Activated naive CD4-positive, alpha-beta T cell treated with anti-CD3 and anti-CD28 coated beads for 36 hours (primary cell): ENCODE measurements at regions of chr1 and their contacts with region 1.

Region 1: DNA sequence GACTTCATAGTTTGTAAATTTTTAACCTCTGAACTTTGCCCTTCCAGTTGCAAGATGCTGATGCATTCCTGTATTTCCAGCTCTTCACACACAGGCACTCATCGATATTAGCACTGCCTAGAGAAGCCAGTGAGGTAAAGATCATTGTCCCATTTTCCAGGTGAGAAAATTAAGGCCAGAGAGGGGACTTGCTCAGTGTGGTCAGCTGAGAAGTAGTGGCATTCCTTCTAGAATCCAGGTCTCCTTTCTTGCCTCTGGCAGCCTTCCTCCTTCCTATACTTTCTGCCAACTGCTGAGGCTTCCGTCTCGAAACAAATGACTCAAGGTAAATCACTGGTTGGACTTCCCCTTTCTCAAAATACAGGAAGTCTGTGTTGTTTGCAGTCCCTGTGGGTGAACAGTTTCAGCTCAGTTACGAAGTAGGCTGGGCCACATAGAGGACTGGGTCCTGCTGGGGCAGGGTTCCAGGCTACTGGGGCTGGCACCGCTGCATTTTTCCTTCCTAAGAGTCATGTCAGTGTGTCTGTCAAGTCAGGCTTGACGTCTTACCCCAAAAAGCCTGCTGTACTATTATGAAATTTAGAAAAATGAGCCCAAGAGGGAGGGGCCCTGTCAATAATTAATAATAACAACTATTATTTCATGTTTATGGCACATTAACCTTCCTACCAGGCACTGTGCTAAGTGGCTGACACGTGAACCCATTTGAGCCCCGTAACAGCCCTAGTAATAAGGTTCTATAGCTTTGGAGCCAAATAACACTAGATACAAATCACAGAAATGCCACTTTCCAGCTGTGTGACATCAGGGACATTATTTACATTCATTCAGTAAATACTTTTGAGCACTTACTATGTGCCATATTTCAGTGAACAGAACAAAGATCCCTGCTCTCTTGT is 16.6 kb upstream of the RNF19B start:
- DNase-seq: peak; percentile 85
- H3K4me3 Mint-ChIP-seq: peak overlapping the region; percentile 30
- H3K27ac Mint-ChIP-seq: peak overlapping the region; percentile 91
- H3K4me1 Mint-ChIP-seq: peaks cover 44% of the 10 kb centered on the region
- H3K27me3 Mint-ChIP-seq: no peaks in the 10 kb centered on the region

Region 2: GRCh38 chr1:32684167-32684811 is 297.0 kb before region 1 on chr1:
- CTCF ChIA-PET with region 1: no interaction called
- intact Hi-C with region 1: no loop called
- DNase-seq: no peak
- H3K4me3 Mint-ChIP-seq: no peak overlapping the region
- H3K27ac Mint-ChIP-seq: peak overlapping the region; percentile 76
- H3K4me1 Mint-ChIP-seq: peaks cover 15% of the 10 kb centered on the region
- H3K27me3 Mint-ChIP-seq: no peaks in the 10 kb centered on the region

Region 3: GRCh38 chr1:32817159-32817814 is 164.0 kb before region 1 on chr1 and contains the starts of genes S100PBP and YARS1:
- CTCF ChIA-PET with region 1: no interaction called
- intact Hi-C with region 1: loop called (anchors 5 kb)
- DNase-seq: peak; percentile 100
- H3K4me3 Mint-ChIP-seq: peak within 1 kb of the TSS; percentile 92
- H3K27ac Mint-ChIP-seq: peak within 1 kb of the TSS; percentile 94
- H3K4me1 Mint-ChIP-seq: peaks cover 51% of the 10 kb centered on the region
- H3K27me3 Mint-ChIP-seq: no peaks in the 10 kb centered on the region
- total RNA-seq, gene S100PBP: 26.1 to 31.2 TPM
- total RNA-seq, gene YARS1: 293 to 312 TPM

Region 4: DNA sequence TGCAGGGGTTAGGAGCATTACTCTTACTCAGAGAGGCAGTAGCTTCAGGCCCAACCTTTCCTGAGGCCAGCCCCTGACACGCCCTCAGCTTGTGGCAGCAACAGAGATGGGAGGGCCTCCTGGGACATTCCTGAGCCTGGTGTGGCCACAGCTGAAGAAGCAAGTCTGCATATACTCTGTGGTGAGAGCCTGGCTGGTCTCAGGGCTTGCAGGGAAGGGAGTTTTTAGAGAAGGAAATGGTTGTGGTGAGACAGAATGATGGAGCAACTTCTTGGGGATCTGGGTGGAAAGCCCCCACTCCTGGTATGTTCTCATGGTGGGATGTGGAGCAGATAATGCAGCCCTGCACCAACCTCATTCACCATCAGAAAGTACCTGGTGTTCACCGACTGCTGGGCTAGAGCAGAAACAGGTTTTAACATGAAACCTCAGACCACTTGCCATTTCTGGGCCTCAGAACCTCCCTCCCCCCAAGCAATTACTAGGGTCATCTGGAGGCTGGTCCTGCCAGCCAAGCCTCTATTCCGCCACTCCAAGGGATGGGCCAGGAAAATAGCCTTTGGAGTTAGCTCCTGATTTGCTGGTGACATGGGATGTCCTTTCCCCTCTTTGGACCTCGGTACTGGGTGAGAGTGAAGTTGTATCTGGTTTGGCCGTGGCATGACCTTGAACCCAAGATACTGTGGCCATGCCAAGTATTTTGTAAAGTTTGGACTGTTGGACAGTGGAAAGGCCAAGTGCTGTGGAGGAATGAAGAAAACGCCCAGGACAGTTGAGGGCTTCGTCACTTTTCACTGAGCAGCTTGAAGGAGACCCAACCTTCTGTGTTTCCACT is 11.5 kb after region 1 on chr1:
- CTCF ChIA-PET with region 1: interaction called, 3 read pairs
- intact Hi-C with region 1: loop called (anchors 1 kb)
- DNase-seq: peak; percentile 89
- H3K4me3 Mint-ChIP-seq: no peak overlapping the region
- H3K27ac Mint-ChIP-seq: peak overlapping the region; percentile 73
- H3K4me1 Mint-ChIP-seq: peaks cover 32% of the 10 kb centered on the region
- H3K27me3 Mint-ChIP-seq: no peaks in the 10 kb centered on the region

Region 5: GRCh38 chr1:33007190-33008050 is 26.2 kb after region 1 on chr1:
- CTCF ChIA-PET with region 1: interaction called, 4 read pairs
- intact Hi-C with region 1: loop called (anchors 1 kb)
- DNase-seq: peak; percentile 28
- H3K4me3 Mint-ChIP-seq: no peak overlapping the region
- H3K27ac Mint-ChIP-seq: peak overlapping the region; percentile 47
- H3K4me1 Mint-ChIP-seq: peaks cover 23% of the 10 kb centered on the region
- H3K27me3 Mint-ChIP-seq: no peaks in the 10 kb centered on the region

Region 6: GRCh38 chr1:33022650-33023200 is 41.5 kb after region 1 on chr1:
- CTCF ChIA-PET with region 1: no interaction called
- intact Hi-C with region 1: loop called (anchors 1 kb)
- DNase-seq: no peak
- H3K4me3 Mint-ChIP-seq: no peak overlapping the region
- H3K27ac Mint-ChIP-seq: no peak overlapping the region
- H3K4me1 Mint-ChIP-seq: peaks cover 64% of the 10 kb centered on the region
- H3K27me3 Mint-ChIP-seq: no peaks in the 10 kb centered on the region

Region 7: GRCh38 chr1:33036526-33037503 is 55.6 kb after region 1 on chr1 and contains the start of gene AK2:
- CTCF ChIA-PET with region 1: no interaction called
- intact Hi-C with region 1: loop called (anchors 1 kb)
- DNase-seq: peak; percentile 96
- H3K4me3 Mint-ChIP-seq: peak within 1 kb of the TSS; percentile 92
- H3K27ac Mint-ChIP-seq: peak within 1 kb of the TSS; percentile 87
- H3K4me1 Mint-ChIP-seq: peaks cover 40% of the 10 kb centered on the region
- H3K27me3 Mint-ChIP-seq: no peaks in the 10 kb centered on the region
- total RNA-seq, gene AK2: 311 to 328 TPM

Region 8: DNA sequence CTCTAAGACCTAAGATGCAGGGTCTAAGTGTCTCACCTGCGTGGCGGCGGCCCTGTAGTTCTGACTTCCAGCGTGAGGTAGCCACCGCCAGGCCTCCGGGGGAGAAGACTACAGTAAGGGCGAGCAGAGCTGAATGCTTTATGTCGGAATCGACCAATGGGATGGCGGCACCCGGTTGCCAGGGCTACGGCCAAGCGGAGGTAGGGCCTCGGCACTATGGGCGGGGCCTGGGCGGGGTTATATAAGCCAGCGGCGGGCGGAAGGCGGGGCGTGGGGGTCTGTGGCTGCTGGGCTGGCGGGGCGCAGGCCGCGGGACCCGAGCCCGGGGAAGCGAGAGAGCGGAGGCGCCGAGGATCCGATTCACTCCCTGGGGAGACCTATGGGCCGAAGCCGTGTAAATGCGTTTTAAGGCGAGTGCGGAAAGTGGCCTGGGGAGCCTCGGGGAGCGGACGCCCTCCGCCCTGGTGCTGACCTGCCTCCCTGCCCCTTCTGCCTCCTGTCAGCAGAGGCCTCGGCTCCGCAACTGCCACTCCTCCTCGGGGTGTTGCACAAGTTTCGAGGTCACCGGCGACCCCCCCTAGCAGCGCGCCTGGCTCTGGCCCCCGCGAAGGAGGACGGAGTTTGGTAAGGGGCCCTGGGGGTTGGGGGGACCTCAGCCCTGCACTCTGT is 99.8 kb after region 1 on chr1 and contains the start of gene AZIN2:
- CTCF ChIA-PET with region 1: no interaction called
- intact Hi-C with region 1: loop called (anchors 1 kb)
- DNase-seq: peak; percentile 98
- H3K4me3 Mint-ChIP-seq: peak within 1 kb of the TSS; percentile 75
- H3K27ac Mint-ChIP-seq: peak within 1 kb of the TSS; percentile 19
- H3K4me1 Mint-ChIP-seq: peaks cover 18% of the 10 kb centered on the region
- H3K27me3 Mint-ChIP-seq: no peaks in the 10 kb centered on the region
- total RNA-seq, gene AZIN2: 1.5 to 1.6 TPM

Region 9: DNA sequence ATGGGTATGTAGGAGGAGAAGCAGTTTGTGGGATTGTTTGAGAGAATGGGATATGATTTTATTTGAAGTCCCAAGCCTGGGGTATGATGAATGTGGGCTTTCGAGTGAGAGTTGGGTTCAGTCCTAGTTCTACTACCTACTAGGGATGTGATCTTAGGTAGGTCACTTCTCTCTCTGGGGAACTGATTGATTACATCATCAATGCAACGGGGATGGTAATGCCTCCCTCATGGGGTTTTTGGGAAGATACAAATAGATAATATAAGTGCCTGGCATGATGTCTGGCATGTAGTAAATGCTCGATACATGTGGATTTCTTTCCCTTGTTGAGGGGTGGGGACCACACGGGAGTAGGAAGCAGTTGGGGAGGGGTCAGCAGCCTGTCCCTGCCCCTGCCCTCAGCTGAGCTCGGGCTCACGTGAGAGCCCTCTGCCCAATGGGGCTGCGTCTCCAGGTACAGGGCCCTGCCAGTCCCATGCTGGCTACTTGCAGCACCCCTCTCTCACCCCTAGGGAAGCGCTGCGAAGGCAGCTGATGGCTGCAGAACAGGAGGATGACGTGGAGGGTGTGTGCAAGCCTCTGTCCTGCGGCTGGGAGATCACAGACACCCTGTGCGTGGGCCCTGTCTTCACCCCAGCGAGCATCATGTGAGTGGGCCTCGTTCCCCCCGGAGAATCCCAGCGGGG is 138.4 kb after region 1 on chr1:
- CTCF ChIA-PET with region 1: no interaction called
- intact Hi-C with region 1: no loop called
- DNase-seq: no peak
- H3K4me3 Mint-ChIP-seq: no peak overlapping the region
- H3K27ac Mint-ChIP-seq: no peak overlapping the region
- H3K4me1 Mint-ChIP-seq: no peaks in the 10 kb centered on the region
- H3K27me3 Mint-ChIP-seq: no peaks in the 10 kb centered on the region